ENCODE measurements at regions of chr19 and their contacts with region 1.

Region 1: DNA sequence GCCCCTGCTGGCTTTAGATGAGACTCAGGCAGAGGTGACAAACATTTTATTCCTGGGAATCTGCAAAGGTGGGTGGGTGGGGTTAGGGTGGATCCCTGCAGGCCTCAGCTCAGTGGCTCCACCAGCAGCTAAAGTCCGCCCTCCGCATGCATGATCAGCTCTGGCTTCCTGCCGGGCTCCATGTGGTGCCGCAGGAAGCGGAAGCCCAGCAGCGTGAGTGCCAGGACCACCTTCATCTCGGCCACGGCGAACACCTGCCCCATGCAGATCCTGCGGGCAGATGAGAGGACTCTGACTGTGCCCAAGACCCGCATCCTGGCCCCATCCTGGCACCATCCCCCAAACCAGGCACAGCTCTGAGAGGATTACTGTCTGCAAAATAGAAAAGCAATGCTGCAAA is 26.3 kb downstream of the CYP4F2 start:
- DNase-seq: peak in 1 of 2 donors; percentile 29
- H3K4me3 ChIP-seq: no peak overlapping the region
- H3K27ac ChIP-seq: no peak overlapping the region
- H3K4me1 ChIP-seq: peaks cover 0 to 10% (median 2%) of the 10 kb centered on the region in 4 donors
- H3K27me3 ChIP-seq: peaks cover 0 to 25% (median 9%) of the 10 kb centered on the region in 3 donors
- CTCF ChIP-seq: no peak
- EP300 ChIP-seq: no peak
- POLR2A ChIP-seq: no peak

Region 2: GRCh38 chr19:15623711-15624318 is 247.8 kb before region 1 on chr19:
- intact Hi-C with region 1: loop called (anchors 5 kb)
- DNase-seq: peak in 1 of 2 donors; percentile 39
- H3K4me3 ChIP-seq: no peak overlapping the region
- H3K27ac ChIP-seq: no peak overlapping the region
- H3K4me1 ChIP-seq: peaks cover 0 to 1% (median under 1%) of the 10 kb centered on the region in 4 donors
- H3K27me3 ChIP-seq: peaks cover 0 to 55% (median 11%) of the 10 kb centered on the region in 3 donors
- CTCF ChIP-seq: no peak
- EP300 ChIP-seq: no peak
- POLR2A ChIP-seq: no peak

Measured in stomach (tissue), 19 donors.